ENCODE measurements at regions of chr4 and their contacts with region 1.

Region 1: DNA sequence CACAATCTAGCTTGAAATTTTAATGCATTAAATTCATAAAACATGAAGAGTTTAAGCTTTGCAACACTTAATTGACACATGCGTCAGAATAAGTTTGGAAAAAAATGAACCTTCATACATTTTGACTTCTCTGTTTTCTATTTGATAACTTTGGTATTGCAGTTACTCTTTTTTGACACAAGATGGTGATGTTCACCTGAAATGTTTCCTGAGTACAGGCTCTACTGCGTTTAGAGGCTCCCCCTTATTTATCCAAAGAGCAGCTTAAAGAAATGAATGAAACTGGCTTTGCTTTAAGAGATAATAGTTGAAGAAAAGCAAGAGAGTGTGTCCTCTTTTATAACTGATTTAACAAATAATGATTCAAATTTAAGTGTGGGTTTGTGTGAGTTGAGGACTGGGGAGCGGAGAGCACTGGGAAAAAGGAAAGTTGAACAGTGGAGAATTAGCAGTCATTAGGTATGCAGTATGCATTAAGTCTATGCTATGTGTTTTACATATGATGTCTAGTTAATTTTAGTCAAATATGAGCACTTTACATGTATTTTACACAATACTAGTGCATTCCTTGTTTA is 180.6 kb upstream of the NUDT6 start:
- DNase-seq: no peak
- H3K4me3 ChIP-seq: no peak overlapping the region
- H3K27ac ChIP-seq: no peak overlapping the region
- H3K27me3 ChIP-seq: no peaks in the 10 kb centered on the region
- CTCF ChIP-seq: peak; percentile 74

Region 2: DNA sequence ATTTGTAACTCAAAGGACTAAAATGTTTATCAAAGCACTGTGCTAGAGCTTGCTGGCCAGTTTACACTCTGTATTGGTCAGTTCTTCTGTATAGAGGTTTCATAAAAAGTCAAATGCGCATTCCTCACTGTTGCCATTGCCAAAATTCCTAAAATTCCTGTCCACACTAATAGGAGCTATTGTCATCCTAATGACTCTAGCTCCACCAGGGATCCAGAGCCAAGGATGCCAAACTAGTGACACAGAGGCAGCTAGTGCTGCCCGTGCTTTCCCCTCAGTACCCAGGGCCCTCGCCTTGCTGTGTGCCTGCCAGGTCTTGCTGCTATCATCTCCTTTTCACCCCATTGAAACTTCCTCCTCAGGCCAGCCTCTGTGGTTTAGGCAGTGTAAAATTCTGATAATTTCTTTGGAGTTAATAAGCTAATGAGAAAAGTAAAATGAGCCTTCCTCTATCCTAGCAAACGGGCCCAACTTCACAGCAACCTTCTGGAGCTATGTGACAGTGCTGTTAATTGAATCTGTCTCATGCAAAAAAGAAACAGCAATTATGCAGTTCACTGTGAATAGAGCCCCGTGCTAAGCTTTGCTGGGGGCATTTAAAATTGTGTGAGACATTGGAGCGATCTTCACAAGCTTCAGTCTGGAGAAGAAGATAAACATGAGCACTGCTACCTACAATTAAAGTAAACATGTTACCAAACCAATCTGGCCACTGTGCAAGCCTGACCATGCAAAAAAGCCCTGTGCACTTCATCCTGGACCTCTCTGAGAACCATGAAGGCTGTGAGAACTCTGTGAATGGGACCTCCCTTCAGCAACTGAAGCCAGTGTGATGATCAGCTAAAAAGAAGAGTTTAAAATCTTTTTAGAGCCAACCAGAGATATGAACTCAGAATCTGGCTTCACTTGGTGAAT is 319.4 kb before region 1 on chr4:
- CTCF ChIA-PET with region 1: no interaction called
- POLR2A ChIA-PET with region 1: no interaction called
- DNase-seq: peak; percentile 60
- H3K4me3 ChIP-seq: no peak overlapping the region
- H3K27ac ChIP-seq: peak overlapping the region; percentile 57
- H3K27me3 ChIP-seq: no peaks in the 10 kb centered on the region
- CTCF ChIP-seq: no peak

Region 3: DNA sequence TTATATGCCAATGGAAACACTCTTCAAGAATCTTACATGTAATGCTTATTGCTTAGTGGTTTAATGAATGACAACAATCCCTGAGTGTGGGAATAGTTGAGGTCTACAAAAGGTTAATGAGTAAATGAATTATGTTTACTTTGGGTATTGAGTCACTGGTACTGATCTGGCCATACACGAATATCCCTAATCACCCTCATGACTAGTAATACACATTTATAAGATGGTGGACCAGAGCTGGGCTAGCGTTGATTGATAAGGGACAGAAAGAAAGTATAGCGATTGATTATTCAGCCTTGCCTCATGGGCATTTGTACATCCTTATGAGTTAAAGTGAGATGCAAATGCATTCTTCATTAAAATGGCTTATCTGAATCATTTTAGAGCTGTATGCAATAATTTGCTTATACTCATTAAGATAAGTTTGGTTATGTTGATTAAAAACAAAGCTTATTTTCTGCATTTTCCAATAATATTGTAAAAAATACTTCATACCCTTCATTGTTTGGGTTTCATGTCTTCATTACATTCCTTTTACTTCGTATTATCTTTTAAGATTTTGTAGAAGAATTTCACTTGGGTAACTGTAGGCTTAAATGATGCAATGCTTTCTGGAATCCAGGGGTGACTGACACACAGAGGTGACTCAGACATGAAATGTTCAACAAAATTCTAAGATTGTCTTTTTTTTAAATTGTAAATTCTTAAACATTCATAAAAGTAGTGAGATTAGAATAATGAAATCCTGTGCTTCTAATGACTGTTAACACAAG is 229.0 kb before region 1 on chr4:
- CTCF ChIA-PET with region 1: no interaction called
- POLR2A ChIA-PET with region 1: no interaction called
- DNase-seq: peak; percentile 51
- H3K4me3 ChIP-seq: no peak overlapping the region
- H3K27ac ChIP-seq: no peak overlapping the region
- H3K27me3 ChIP-seq: no peaks in the 10 kb centered on the region
- CTCF ChIP-seq: no peak

Region 4: GRCh38 chr4:123037804-123038203 is 65.2 kb before region 1 on chr4:
- CTCF ChIA-PET with region 1: no interaction called
- POLR2A ChIA-PET with region 1: no interaction called
- DNase-seq: no peak
- H3K4me3 ChIP-seq: no peak overlapping the region
- H3K27ac ChIP-seq: no peak overlapping the region
- H3K27me3 ChIP-seq: no peaks in the 10 kb centered on the region
- CTCF ChIP-seq: no peak

Region 5: GRCh38 chr4:123092586-123092985 is 10.4 kb before region 1 on chr4:
- CTCF ChIA-PET with region 1: interaction called, 11 read pairs
- POLR2A ChIA-PET with region 1: no interaction called
- DNase-seq: no peak
- H3K4me3 ChIP-seq: no peak overlapping the region
- H3K27ac ChIP-seq: no peak overlapping the region
- H3K27me3 ChIP-seq: no peaks in the 10 kb centered on the region
- CTCF ChIP-seq: no peak

Region 6: DNA sequence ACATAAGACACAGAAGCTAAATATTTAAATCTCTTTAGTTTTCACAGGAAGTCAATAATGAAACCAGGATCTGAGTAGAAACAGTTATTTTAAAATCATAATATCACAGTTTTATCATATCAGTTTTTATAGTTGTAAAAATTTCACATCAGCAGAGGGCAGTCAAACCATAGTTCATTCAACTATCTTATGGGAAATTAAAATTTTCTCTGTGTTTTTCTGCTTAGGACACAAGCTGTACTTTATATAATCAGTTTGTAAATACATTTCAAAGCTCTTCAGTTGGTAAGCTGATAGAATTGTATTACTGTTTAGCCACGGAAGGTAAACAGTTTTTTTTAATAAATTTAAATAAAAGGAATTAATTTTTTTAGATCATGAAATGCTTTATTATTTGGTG is 24.2 kb after region 1 on chr4:
- CTCF ChIA-PET with region 1: interaction called, 14 read pairs
- POLR2A ChIA-PET with region 1: no interaction called
- DNase-seq: no peak
- H3K4me3 ChIP-seq: no peak overlapping the region
- H3K27ac ChIP-seq: no peak overlapping the region
- H3K27me3 ChIP-seq: no peaks in the 10 kb centered on the region
- CTCF ChIP-seq: peak; percentile 32

Region 7: DNA sequence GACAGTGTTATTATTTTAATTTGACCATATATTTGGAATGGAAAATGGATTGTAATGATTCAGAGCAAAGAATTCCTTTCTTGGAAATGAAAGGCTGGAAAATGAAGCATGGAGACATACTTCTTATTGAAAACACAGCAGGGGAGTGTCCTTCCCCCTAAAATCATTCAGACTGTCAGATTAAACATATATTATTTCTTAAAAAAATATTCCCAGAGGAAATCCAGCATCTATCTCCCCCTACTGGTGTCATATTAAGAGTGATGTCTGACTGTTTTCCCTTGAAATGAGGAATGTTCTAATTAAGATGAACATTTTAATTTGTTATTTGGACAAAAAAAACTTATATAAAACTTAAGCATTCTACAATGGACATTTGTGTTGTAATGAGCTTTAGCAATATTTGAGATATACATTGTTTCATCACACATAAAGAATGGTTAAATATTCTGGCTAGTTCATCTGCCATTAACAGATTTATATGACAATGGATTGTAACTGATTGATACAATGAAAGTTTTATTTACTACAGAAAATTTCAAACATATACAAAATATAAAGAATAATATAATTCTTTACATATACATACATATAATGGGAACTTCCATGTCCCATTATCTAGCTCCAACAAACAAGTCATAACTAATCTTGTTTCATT is 558.2 kb after region 1 on chr4:
- CTCF ChIA-PET with region 1: interaction called, 22 read pairs
- POLR2A ChIA-PET with region 1: no interaction called
- DNase-seq: no peak
- H3K4me3 ChIP-seq: no peak overlapping the region
- H3K27ac ChIP-seq: no peak overlapping the region
- H3K27me3 ChIP-seq: no peaks in the 10 kb centered on the region
- CTCF ChIP-seq: peak; percentile 69

Region 8: DNA sequence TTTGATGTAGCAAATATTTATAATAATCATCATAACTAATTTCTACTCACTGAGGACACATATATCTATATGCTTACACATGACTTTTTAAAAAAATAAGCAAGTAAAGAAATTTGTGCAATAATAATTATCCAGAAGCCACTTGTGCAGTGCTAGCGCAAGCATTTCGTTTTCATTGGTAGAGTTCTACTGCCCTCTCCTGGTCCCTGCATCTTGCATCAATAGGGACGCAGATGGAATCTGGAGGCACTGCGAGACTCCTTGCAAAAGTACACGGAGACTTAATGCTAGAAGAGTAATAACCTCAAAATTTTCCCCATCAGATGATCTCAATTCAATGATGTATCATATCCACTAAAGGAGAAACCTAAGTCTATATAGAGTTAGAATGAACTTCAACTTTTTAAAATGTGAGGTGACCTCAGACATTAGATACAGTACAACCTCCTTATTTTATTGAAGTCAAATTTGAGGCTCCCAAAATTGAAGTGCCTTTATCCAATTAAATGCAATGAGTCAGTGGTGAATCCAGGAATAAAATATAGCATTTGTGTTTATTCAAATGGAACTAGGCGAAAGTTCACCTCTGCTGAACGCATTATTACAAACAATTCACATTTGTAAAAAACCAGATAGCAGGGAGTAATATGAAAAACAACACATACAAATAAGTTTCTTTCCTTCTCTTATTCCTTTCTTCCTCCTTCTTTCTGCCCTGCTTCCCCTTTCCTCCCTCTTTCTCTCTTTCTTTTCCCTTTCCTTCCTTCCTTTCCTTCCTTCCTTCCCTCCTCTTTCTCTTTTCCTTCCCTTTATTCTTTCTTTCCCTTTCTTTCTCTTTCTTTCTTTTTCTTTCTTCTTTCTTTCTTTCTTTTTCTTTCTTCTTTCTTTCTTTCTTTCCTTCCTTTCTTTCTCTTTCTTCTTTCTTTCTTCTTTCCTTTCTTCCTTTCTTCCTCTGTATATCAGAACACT is 1159.5 kb after region 1 on chr4:
- CTCF ChIA-PET with region 1: interaction called, 11 read pairs
- POLR2A ChIA-PET with region 1: no interaction called
- DNase-seq: peak; percentile 73
- H3K4me3 ChIP-seq: no peak overlapping the region
- H3K27ac ChIP-seq: no peak overlapping the region
- H3K27me3 ChIP-seq: no peaks in the 10 kb centered on the region
- CTCF ChIP-seq: peak; percentile 92

Region 9: DNA sequence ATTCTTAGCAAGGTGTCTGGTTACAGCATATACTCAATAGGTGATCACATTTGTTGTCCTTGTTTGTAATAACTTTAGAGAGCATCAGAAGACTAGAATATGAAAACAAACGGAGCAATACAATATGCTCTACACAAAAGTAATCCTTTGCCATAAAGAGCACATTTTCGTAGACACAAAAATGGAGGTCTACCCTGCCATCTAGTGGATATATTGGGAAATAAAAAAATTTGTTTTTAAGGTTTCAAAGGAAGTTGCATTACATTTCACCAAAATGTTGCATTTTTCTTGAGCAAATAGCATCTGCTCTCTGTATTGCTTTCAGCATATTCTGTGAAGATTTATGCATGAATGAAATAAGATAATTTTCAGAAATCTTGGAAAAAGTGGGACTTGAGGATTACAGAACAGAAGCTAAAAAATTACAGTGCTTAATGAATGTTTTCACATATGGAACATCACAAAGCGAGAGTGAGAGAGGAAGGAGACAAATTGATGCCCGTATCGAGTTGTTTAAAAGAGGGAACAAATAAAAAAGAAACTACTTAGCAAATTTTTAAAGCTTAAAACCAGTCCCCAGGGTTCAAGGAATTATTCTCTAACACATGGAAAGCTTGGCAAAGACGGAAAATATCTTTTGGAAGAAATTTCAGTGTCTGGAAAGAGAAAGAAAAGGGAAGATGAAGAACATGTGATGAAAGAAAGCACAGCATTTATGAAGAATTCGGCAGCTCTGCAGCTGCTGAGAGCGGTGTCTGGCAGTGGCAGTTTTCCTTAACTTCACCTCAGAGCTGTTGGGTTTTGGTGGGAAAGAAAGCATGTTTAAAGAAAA is 1219.5 kb after region 1 on chr4:
- CTCF ChIA-PET with region 1: interaction called, 22 read pairs
- POLR2A ChIA-PET with region 1: no interaction called
- DNase-seq: no peak
- H3K4me3 ChIP-seq: no peak overlapping the region
- H3K27ac ChIP-seq: no peak overlapping the region
- H3K27me3 ChIP-seq: peaks cover 3% of the 10 kb centered on the region
- CTCF ChIP-seq: peak; percentile 54